ENCODE measurements at regions of chr11 and their contacts with region 1.

Region 1: GRCh38 chr11:110195845-110196754 is 100.3 kb downstream of the RDX start:
- DNase-seq: peak; percentile 56 to 96
- ATAC-seq: peak; percentile 86 to 87
- H3K4me3 ChIP-seq: no peak overlapping the region
- H3K27ac ChIP-seq: peak overlapping the region; percentile 92 to 98
- H3K4me1 ChIP-seq: peaks cover 75% of the 10 kb centered on the region
- CTCF ChIP-seq: no peak
- EP300 ChIP-seq: peak; percentile 98 to 100
- POLR2A ChIP-seq: no peak
- RAD21 ChIP-seq: peak in 1 of 2 experiments; percentile 51; a peak in 1 of 5 replicates

Region 2: GRCh38 chr11:109946322-109946846 is 249.7 kb before region 1 on chr11:
- CTCF ChIA-PET with region 1: interaction called, 14 read pairs
- POLR2A ChIA-PET with region 1: no interaction called
- DNase-seq: peak; percentile 64 to 93
- ATAC-seq: peak; percentile 99
- H3K4me3 ChIP-seq: peak overlapping the region; percentile 36
- H3K27ac ChIP-seq: peak overlapping the region; percentile 87 to 90
- H3K4me1 ChIP-seq: peaks cover 8% of the 10 kb centered on the region; the same call in 2 of the 3 replicates
- CTCF ChIP-seq: peak; percentile 85
- EP300 ChIP-seq: no peak
- POLR2A ChIP-seq: no peak
- RAD21 ChIP-seq: peak; percentile 87 to 93

Region 3: GRCh38 chr11:110173811-110174644 is 22.1 kb before region 1 on chr11:
- CTCF ChIA-PET with region 1: interaction called, 27 read pairs
- POLR2A ChIA-PET with region 1: no interaction called
- DNase-seq: peak; percentile 51 to 75
- ATAC-seq: peak; percentile 72 to 84
- H3K4me3 ChIP-seq: no peak overlapping the region
- H3K27ac ChIP-seq: peak overlapping the region; percentile 69 to 70
- H3K4me1 ChIP-seq: peaks cover 36% of the 10 kb centered on the region
- CTCF ChIP-seq: peak; percentile 65
- EP300 ChIP-seq: no peak
- POLR2A ChIP-seq: no peak
- RAD21 ChIP-seq: peak; percentile 51 to 64

Region 4: GRCh38 chr11:110251837-110252236 is 55.7 kb after region 1 on chr11:
- CTCF ChIA-PET with region 1: interaction called, 14 read pairs
- POLR2A ChIA-PET with region 1: no interaction called
- DNase-seq: peak; percentile 5 to 31
- ATAC-seq: peak; percentile 38 to 46; a peak in 2 of 6 replicates
- H3K4me3 ChIP-seq: no peak overlapping the region
- H3K27ac ChIP-seq: peak overlapping the region; percentile 35 to 69; a peak in 5 of 6 replicates
- H3K4me1 ChIP-seq: peaks cover 70% of the 10 kb centered on the region
- CTCF ChIP-seq: no peak
- EP300 ChIP-seq: no peak
- POLR2A ChIP-seq: no peak
- RAD21 ChIP-seq: no peak

Region 5: DNA sequence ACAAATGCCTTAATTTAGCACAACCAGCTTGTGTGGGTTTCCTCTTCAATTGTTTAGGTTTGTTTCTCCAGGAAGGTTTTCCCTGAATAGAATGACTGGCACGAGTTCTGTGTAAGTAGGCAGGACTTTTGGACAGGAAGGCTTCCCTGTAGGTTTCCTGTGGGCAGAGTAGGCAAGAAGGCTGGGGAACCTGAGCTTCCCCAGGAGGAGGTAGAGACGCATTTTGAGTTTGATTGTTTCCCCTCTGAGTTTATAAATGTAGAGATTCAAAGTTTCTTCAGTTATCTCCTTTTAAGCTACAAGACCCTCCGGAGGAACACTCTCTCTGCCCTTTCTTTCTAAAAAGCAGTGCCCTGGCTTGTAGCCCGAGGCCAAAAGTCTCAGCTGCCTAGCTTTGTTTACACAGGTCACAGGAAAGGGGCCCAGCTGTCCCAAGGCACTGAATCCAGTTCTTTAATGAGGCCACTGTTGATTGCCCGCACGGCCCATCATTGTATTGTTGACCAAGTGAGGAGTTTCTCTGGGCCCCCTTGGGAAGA is 166.9 kb after region 1 on chr11:
- CTCF ChIA-PET with region 1: interaction called, 35 read pairs
- POLR2A ChIA-PET with region 1: no interaction called
- DNase-seq: peak in 1 of 2 experiments; percentile 70
- ATAC-seq: peak; percentile 79 to 87; a peak in 5 of 6 replicates
- H3K4me3 ChIP-seq: no peak overlapping the region; the same call in 2 of the 3 replicates
- H3K27ac ChIP-seq: peak overlapping the region; percentile 82 to 92
- H3K4me1 ChIP-seq: peaks cover 71% of the 10 kb centered on the region
- CTCF ChIP-seq: no peak
- EP300 ChIP-seq: no peak
- POLR2A ChIP-seq: no peak
- RAD21 ChIP-seq: no peak

Region 6: GRCh38 chr11:110376711-110377324 is 180.7 kb after region 1 on chr11:
- CTCF ChIA-PET with region 1: interaction called, 28 read pairs
- POLR2A ChIA-PET with region 1: no interaction called
- DNase-seq: peak; percentile 65 to 87
- ATAC-seq: peak; percentile 81 to 90
- H3K4me3 ChIP-seq: no peak overlapping the region
- H3K27ac ChIP-seq: peak overlapping the region; percentile 63 to 74
- H3K4me1 ChIP-seq: peaks cover 49% of the 10 kb centered on the region
- CTCF ChIP-seq: peak; percentile 79
- EP300 ChIP-seq: no peak
- POLR2A ChIP-seq: no peak
- RAD21 ChIP-seq: peak; percentile 83 to 84

Measured in A549 (cell line).